Dorsolateral prefrontal cortex (tissue), 120 donors: ENCODE measurements at regions of chr19 and their contacts with region 1.

Region 1: DNA sequence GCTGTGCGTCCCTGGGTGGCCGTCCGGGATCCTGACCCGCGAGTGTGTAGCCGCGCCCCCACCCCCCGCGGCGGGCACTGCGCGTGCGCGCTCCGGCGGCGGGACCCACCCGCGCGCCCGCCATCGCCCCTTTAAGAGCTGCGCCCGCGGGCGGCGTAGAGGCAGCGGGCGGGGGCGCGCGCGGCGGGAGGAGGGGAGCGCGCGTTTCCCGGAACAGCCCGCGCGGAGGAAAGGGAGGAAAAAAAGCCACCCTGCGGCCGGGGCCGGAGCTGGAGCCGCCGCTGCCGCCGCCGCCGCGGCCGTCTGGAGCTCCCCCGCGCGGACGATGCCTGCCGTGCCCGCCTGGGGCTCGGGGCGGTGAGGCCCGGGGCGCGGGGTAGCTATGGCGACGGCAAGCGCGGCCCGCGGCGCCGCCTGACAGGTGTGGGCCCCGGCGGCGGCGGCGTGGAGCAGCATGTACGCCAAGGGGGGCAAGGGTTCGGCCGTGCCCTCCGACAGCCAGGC is at the start of gene SSBP4:
- DNase-seq: peak in 6 of 10 donors; percentile 39 to 84 (median 55)
- H3K4me3 ChIP-seq: peak within 1 kb of the TSS; percentile 44 to 86 (median 68)
- H3K27ac ChIP-seq: peak within 1 kb of the TSS in 58 of 59 donors; percentile 22 to 97 (median 92)
- H3K27me3 ChIP-seq: peaks cover 0 to 17% (median 0%) of the 10 kb centered on the region in 45 donors
- CTCF ChIP-seq: peak in 27 of 56 donors; percentile 5 to 61 (median 36)
- total RNA-seq, gene SSBP4: 42.5 to 168 (median 93.8) TPM

Region 2: DNA sequence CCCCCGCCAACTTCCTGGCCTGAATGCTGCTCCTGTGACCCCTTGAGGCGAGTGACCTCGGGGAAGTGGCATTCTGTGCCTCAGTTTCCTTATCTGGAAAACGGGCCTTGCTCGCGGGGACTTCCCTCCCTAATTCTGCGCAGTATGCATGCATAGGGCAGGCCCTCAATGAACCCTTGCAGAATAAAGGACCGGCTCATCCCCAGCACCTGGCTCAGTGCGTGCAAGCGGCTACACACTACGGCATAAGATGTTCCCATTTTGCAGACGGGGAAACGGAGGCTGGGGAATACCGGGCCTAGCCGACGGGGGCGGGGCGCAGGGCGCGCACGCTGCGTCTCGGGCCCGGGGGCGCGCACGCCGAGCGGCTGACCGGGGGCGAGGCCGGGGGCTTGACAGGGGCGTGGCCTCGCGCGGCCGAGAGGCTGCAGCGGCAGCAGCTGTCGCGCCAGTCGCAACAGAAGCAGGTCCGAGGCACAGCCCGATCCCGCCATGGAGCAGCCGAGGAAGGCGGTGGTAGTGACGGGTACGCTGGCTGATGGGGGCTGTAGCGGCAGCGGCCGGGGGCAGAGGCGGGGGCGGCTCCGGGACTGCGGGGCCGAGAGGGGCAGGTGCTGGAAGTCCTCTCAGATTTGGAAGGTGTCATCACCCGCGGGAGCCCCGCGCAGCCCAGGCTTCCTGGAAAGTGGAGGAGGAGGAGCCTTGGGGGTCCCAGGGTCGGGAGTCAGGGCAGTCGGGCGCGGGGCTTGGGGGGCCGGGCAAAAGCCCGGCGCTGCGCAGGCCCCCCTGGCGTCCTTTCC is 78.9 kb before region 1 on chr19 and contains the start of gene PGPEP1:
- intact Hi-C with region 1: loop called (anchors 5 kb)
- DNase-seq: peak; percentile 41 to 91 (median 64)
- H3K4me3 ChIP-seq: peak within 1 kb of the TSS; percentile 67 to 99 (median 89)
- H3K27ac ChIP-seq: peak within 1 kb of the TSS in 57 of 59 donors; percentile 24 to 92 (median 78)
- H3K27me3 ChIP-seq: no peaks in the 10 kb centered on the region
- CTCF ChIP-seq: peak in 6 of 56 donors; percentile 9 to 27 (median 18)
- total RNA-seq, gene PGPEP1: 20.4 to 93.6 (median 37.7) TPM

Region 3: DNA sequence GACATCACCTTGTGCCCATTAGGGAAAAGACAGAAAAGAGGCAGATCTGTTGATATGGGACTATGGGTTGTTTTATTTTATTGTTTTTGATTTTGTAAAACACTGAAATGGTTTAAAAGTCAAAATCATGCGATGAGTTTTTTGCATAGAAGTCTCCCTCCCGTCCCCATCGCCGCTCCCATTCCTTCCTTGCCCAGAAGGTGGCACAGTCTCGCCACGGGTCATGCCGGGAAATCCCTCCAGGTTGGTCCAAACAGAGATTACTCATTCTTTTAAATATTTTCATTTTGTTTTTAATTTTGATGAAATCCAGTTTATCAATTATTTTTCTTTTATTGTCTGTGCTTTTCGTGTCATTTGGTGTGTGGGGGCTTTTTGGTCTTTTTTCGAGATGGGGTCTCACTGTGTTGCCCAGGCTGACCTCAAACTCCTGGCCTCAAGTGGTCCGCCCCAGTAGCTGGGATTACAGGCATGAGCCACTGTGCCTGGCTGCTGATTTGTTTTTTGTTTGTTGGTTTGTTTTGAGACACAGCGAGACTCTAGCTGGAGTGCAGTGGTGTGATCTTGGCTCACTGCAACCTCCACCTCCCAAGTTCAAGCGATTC is 69.6 kb before region 1 on chr19:
- intact Hi-C with region 1: loop called in 1 of 2 experiments (anchors 5 kb)
- DNase-seq: peak in 8 of 10 donors; percentile 28 to 62 (median 50)
- H3K4me3 ChIP-seq: no peak overlapping the region
- H3K27ac ChIP-seq: no peak overlapping the region
- H3K27me3 ChIP-seq: no peaks in the 10 kb centered on the region
- CTCF ChIP-seq: peak in 54 of 56 donors; percentile 34 to 76 (median 58)